Gastrocnemius medialis (tissue), 4 donors: ENCODE measurements at regions of chr1 and their contacts with region 1.

Region 1: GRCh38 chr1:64136752-64137411 is 66.5 kb upstream of the UBE2U start:
- DNase-seq: peak; percentile 47 to 76
- ATAC-seq: peak; percentile 92 to 94
- H3K4me3 ChIP-seq: no peak overlapping the region
- H3K27ac ChIP-seq: no peak overlapping the region
- H3K4me1 ChIP-seq: no peaks in the 10 kb centered on the region
- H3K27me3 ChIP-seq: no peaks in the 10 kb centered on the region
- CTCF ChIP-seq: peak; percentile 86 to 93 (median 88)
- POLR2A ChIP-seq: no peak

Region 2: DNA sequence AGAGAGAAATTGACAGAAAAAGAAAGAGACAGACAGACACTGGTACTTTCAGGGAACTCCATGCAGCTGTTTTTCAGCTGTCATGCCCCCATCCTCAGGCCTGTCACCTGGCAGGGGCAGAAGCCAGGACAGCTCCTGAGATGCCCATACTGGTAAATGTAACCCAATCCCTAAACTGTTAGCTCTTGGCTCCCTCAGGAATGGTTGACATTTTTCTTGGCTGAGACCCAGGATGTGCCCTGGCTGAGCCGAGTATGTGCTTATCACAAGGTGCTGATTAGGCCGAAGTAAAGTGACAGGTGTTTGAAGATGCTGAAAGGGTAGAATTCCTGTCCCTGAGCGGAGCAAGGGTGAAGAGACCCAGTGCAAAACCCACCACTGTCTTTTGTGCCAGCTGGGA is 493.0 kb before region 1 on chr1:
- in situ Hi-C with region 1: no loop called
- intact Hi-C with region 1: no loop called
- DNase-seq: peak; percentile 84 to 86
- ATAC-seq: peak; percentile 83 to 88
- H3K4me3 ChIP-seq: no peak overlapping the region
- H3K27ac ChIP-seq: peak overlapping the region; percentile 79 to 95 (median 88)
- H3K4me1 ChIP-seq: peaks cover 62 to 76% of the 10 kb centered on the region in 2 donors
- H3K27me3 ChIP-seq: no peaks in the 10 kb centered on the region
- CTCF ChIP-seq: no peak
- POLR2A ChIP-seq: no peak

Region 3: GRCh38 chr1:63691701-63692425 is 445.0 kb before region 1 on chr1:
- in situ Hi-C with region 1: loop called (anchors 10 to 25 kb)
- intact Hi-C with region 1: loop called (anchors 1 kb)
- DNase-seq: peak; percentile 49 to 50
- ATAC-seq: peak; percentile 95 to 96
- H3K4me3 ChIP-seq: no peak overlapping the region
- H3K27ac ChIP-seq: no peak overlapping the region
- H3K4me1 ChIP-seq: peaks cover 5 to 7% of the 10 kb centered on the region in 2 donors
- H3K27me3 ChIP-seq: no peaks in the 10 kb centered on the region
- CTCF ChIP-seq: peak; percentile 59 to 78 (median 65)
- POLR2A ChIP-seq: no peak

Region 4: DNA sequence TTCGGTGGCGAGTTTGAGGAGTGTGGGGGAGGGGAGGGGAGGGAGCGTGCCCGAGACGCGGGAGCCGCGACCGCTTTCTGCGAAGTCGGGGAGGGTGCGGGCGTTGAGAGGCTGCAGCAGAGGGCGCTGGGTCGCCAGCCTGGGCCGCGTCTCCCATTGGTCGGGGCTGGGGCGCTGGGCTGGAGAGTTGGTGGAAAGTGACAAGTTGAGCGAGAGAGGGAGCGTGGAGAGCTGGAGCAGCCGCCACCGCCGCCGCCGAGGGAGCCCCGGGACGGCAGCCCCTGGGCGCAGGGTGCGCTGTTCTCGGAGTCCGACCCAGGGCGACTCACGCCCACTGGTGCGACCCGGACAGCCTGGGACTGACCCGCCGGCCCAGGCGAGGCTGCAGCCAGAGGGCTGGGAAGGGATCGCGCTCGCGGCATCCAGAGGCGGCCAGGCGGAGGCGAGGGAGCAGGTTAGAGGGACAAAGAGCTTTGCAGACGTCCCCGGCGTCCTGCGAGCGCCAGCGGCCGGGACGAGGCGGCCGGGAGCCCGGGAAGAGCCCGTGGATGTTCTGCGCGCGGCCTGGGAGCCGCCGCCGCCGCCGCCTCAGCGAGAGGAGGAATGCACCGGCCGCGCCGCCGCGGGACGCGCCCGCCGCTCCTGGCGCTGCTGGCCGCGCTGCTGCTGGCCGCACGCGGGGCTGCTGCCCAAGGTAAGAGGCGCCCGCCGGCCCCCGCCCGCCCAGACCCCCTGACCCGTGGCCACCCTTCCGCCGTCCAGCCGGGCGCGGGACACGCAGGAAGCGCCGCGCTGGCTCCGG is 362.9 kb before region 1 on chr1 and contains the start of gene ROR1:
- in situ Hi-C with region 1: loop called (anchors 5 to 25 kb)
- intact Hi-C with region 1: loop called (anchors 1 kb)
- DNase-seq: peak; percentile 83 to 86
- ATAC-seq: peak; percentile 93 to 95
- H3K4me3 ChIP-seq: peak within 1 kb of the TSS; percentile 68 to 89 (median 74)
- H3K27ac ChIP-seq: peak within 1 kb of the TSS; percentile 78 to 86 (median 85)
- H3K4me1 ChIP-seq: peaks cover 7 to 23% of the 10 kb centered on the region in 2 donors
- H3K27me3 ChIP-seq: no peaks in the 10 kb centered on the region
- CTCF ChIP-seq: peak; percentile 39 to 82 (median 67)
- POLR2A ChIP-seq: peak; percentile 37 to 57
- total RNA-seq, gene ROR1: 2.5 to 4.3 (median 3.6) TPM

Region 5: DNA sequence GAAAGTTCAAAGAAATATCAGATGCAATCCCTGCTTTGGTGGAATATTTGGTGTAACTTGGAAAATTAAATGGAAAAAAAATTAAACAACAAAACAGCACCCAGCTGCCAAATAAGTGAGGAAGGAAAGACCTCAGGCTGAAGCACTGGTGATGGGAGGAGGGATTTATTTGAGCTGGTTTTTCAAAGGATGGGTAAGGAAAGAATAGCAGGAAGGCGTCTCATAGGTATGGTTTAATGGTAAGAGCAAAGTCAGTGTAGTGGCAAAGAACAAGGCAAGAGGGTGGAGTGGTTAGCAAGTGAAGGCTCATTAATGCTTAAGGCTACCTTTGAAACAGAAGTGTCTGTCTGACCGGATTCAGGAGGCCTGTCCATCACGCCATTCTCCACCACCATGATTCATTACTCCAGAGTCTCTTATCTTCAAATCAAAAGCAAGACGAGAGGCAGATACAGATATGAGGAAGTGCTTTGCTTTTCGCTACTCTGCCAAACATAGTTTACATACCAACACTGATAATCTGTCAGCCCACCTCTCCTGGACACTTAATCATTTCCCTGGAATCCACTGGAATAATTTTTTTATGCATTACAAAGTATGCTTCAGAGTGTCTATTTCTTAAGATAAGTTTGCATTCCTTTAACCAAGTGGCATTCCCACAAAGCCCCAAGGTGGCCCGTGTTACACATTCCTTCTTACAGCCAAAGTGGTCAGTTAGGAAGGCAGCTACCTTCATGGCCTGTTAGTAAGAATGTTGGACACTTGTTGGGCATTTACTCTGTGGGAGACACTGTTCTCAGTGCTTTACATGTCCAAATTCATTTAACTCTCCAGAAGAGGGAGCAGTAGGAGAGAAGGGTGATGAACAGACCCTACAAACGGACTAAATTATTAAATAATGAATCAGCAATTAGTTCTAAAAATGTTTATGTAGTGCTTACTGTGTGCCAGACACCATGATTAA is 216.4 kb before region 1 on chr1:
- in situ Hi-C with region 1: loop called in 1 of 4 experiments (anchors 25 kb)
- intact Hi-C with region 1: loop called (anchors 5 kb)
- DNase-seq: no peak
- ATAC-seq: no peak
- H3K4me3 ChIP-seq: no peak overlapping the region
- H3K27ac ChIP-seq: no peak overlapping the region
- H3K4me1 ChIP-seq: peaks cover 17% of the 10 kb centered on the region in 2 donors
- H3K27me3 ChIP-seq: no peaks in the 10 kb centered on the region
- CTCF ChIP-seq: peak in 1 of 5 experiments; percentile 6
- POLR2A ChIP-seq: no peak

Region 6: DNA sequence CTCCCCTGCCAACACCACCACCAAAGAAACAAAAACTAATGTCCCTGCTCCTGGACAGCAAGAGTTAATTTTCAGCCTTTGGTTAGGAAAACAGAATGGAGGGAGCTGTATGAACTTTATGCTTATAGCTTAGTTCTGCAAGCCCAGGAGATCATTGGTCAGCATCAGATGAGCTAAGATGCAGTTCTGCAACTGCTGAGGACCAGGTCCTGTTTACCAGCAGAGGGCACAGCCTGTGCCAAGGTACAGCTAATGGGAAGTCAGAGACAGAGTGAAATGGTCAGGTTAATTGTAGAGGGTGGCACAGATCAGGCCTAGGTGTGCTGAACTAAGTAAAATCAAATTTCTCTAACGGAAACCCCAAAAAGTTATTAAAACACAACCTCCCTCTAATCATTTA is 201.7 kb before region 1 on chr1:
- in situ Hi-C with region 1: loop called in 3 of 4 experiments (anchors 10 to 25 kb)
- intact Hi-C with region 1: loop called (anchors 1 kb)
- DNase-seq: peak in 1 of 2 donors; percentile 46
- ATAC-seq: peak; percentile 80 to 89
- H3K4me3 ChIP-seq: no peak overlapping the region
- H3K27ac ChIP-seq: peak overlapping the region in 2 of 4 donors; percentile 39 to 44
- H3K4me1 ChIP-seq: peaks cover 10 to 20% of the 10 kb centered on the region in 2 donors
- H3K27me3 ChIP-seq: no peaks in the 10 kb centered on the region
- CTCF ChIP-seq: peak; percentile 2 to 47 (median 33)
- POLR2A ChIP-seq: no peak

Region 7: DNA sequence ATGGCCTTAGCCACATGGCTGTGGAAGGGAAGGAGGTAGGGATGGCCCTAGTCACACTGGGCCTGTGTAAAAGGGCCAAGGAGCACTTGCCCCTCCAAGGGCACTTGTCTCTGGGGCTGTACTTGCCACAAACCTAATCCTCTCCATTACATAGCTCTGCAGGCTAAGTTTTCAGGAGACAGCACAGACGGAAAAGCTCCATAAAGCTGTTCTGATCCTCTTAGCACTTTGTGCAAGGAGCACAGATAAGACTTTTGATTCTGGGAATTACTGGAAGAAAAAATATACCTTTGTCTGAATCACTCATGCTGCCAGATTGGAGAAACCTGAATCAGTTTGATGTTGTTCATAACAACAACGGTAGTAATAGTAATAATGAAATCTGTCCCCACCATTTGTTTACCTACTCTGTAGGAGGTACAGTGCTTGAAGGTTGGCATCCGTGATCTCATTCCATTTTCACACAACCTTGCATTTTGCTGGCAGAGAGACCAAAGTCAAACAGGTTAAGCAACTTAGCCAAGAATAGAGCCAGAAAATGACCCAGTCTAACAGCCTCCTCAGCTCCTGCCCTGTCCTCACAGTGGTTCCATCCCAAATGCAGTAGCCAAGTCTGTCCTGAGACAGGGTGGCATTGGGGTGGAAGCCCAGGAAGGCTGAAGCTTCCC is 156.0 kb before region 1 on chr1:
- in situ Hi-C with region 1: no loop called
- intact Hi-C with region 1: no loop called
- DNase-seq: no peak
- ATAC-seq: peak in 1 of 2 donors; percentile 44
- H3K4me3 ChIP-seq: no peak overlapping the region
- H3K27ac ChIP-seq: no peak overlapping the region
- H3K4me1 ChIP-seq: no peaks in the 10 kb centered on the region
- H3K27me3 ChIP-seq: no peaks in the 10 kb centered on the region
- CTCF ChIP-seq: no peak
- POLR2A ChIP-seq: no peak

Region 8: DNA sequence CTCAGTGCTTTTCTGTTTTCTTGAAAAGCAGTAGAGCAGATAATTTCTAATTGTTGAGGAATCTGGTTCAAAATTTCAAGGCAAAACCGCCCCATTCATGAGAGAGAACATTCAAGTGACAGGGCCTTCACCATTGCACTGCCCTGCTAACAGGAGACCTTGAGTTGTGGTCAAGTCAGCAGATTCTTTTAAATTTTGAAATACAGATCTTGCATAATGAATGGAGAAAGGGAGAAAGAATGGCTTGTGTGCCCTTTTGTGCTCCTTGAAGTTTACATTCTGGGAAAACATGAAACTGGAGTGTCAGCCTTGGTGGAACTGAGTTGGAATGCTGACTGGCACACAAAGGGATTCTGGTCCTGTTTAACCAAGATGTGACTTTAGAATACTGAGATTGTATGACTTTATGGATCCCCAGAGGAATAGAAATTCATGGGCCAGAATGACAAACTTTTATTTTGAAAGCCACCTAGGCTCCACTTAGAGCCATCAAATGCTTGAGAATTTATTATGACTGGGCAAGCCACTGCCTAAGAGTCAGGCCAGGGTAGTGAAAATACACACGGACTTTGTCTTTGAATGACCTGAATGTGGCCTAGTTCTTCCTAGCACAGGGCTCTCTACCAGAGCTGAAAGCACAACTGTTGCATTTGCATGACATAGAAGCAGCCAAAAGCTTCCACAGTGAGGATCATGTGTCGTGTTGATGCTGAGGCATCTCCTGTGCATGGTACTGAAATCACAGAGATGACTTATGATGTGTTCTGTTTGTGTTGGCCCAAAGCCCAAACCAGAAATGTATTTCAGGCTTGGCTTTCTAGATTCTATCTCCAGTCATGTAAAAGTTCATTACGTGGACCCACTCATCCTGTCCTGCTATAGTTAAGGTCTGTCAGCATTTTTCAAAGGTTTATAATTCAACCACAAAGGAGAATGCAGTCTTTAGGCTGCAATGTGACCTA is 97.6 kb before region 1 on chr1:
- in situ Hi-C with region 1: no loop called
- intact Hi-C with region 1: loop called (anchors 5 kb)
- DNase-seq: peak; percentile 92 to 94
- ATAC-seq: peak; percentile 93 to 94
- H3K4me3 ChIP-seq: no peak overlapping the region
- H3K27ac ChIP-seq: peak overlapping the region; percentile 83 to 95 (median 84)
- H3K4me1 ChIP-seq: peaks cover 51 to 57% of the 10 kb centered on the region in 2 donors
- H3K27me3 ChIP-seq: no peaks in the 10 kb centered on the region
- CTCF ChIP-seq: no peak
- POLR2A ChIP-seq: peak in 1 of 2 donors; percentile 65